ENCODE measurements at regions of chr13 and their contacts with region 1.

Region 1: GRCh38 chr13:24741016-24741662 is 22.8 kb upstream of the RNF17 start:
- DNase-seq: no peak
- ATAC-seq: peak; percentile 29
- H3K4me3 Mint-ChIP-seq: no peak overlapping the region
- H3K27ac Mint-ChIP-seq: no peak overlapping the region
- H3K4me1 Mint-ChIP-seq: peaks cover 10% of the 10 kb centered on the region
- H3K27me3 Mint-ChIP-seq: peaks cover 36% of the 10 kb centered on the region
- CTCF ChIP-seq: no peak

Region 2: DNA sequence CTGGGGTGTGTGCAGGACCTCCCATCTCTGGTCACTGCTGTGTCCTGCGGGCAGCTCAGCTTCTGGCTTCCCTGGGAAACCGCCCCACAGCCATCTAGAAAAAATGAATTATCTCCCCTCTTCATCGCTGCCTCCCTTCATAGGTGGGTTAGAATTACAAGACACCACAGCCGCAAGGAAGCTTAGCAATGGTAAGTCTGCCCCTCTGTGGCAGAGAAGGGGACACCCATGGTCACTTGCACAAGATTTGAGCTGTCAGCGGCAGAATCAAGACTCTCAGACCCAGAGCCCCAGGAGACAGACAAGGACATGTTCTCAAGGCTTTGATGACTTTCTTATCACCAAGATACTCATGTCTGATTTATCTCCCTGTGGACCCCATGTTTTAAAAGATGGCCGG is 244.0 kb after region 1 on chr13:
- CTCF ChIA-PET with region 1: interaction called, 20 read pairs
- POLR2A ChIA-PET with region 1: no interaction called
- DNase-seq: peak; percentile 36
- ATAC-seq: peak; percentile 82
- H3K4me3 Mint-ChIP-seq: no peak overlapping the region
- H3K27ac Mint-ChIP-seq: no peak overlapping the region
- H3K4me1 Mint-ChIP-seq: peaks cover 35% of the 10 kb centered on the region
- H3K27me3 Mint-ChIP-seq: peaks cover 11% of the 10 kb centered on the region
- CTCF ChIP-seq: no peak